ENCODE measurements at regions of chr20 and their contacts with region 1.

Region 1: GRCh38 chr20:57346477-57346876 is 4.6 kb upstream of the RAE1 start:
- DNase-seq: peak; percentile 65
- H3K4me3 ChIP-seq: no peak overlapping the region
- H3K27ac ChIP-seq: no peak overlapping the region
- H3K4me1 ChIP-seq: no peaks in the 10 kb centered on the region
- H3K27me3 ChIP-seq: no peaks in the 10 kb centered on the region
- CTCF ChIP-seq: peak; percentile 53 to 72 (median 71)

Region 2: DNA sequence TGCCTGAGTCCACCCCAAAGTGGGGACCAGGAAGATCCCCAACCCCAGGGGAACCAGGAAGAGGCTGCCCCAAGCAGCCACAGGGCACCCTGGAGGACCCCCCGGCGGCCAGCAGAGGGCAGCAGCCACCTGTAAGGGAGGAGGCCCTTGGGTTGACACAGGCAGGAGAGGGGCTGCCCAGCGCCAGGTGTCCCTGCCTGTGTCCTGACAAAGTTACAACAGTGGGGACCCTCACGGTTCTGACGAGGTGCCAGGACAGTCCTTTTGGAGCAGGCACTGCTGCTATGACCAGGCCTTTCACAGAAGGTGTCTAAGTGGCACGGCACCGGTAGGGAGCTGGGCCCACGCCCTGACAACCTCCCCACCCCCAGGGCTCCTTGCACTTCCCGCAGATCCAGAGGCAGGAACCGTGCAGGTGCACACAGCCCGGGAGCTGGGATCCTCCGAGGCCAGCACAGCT is 256.8 kb before region 1 on chr20:
- dilution Hi-C with region 1: loop called (anchors 25 kb)
- DNase-seq: no peak
- H3K4me3 ChIP-seq: no peak overlapping the region
- H3K27ac ChIP-seq: no peak overlapping the region
- H3K4me1 ChIP-seq: peaks cover 7% of the 10 kb centered on the region
- H3K27me3 ChIP-seq: peaks cover 8% of the 10 kb centered on the region
- CTCF ChIP-seq: peak; percentile 72 to 99 (median 91)